Endothelial cell of umbilical vein (primary cell): ENCODE measurements at regions of chr5 and their contacts with region 1.

Region 1: DNA sequence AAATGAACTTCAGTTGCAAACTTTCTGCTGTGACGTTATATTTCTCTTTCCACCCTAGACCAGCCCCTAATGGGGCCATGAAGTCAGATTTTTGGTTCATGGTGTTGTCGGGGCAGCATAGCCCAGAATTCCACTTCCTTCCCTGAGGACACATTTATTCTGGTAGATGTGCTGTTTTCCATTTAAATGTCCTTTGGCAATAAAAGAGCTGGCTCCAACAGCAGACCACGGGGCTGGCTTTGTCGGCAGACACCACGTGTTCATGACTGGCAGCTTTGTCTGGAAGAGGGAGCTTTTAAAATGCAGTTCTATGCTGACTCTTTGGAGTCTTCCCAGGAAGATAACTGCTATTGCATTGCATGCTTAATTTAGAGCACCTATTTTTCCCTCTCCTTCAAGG is 17.6 kb upstream of the LCP2 start:
- DNase-seq: no peak
- H3K4me3 ChIP-seq: no peak overlapping the region
- H3K27ac ChIP-seq: no peak overlapping the region
- H3K4me1 ChIP-seq: peaks cover 3% of the 10 kb centered on the region
- H3K27me3 ChIP-seq: peaks cover under 1 to 3% of the 10 kb centered on the region in 2 experiments
- CTCF ChIP-seq: no peak
- POLR2A ChIP-seq: no peak

Region 2: DNA sequence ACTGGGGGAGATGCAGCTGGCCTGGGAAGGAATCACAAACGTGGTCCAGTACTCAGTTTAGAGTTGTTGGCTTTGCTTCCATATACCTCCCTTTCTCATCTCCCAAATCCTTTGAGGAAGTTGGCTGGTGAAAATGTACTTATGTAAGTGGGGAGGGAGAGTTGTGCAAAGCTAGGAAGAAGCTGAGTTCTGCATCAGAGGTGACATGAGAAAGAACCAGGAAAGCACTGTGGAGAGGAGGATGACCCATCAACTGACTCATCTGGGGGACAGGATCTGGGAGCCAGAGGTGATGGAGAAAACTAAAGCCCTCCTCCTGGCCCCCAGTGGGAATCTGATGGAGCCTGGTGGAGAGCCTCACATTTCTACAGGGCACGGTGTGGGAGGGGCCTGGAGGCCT is 57.8 kb after region 1 on chr5:
- CTCF ChIA-PET with region 1: no interaction called
- POLR2A ChIA-PET with region 1: no interaction called
- dilution Hi-C with region 1: no loop called
- intact Hi-C with region 1: loop called (anchors 5 kb)
- DNase-seq: no peak
- H3K4me3 ChIP-seq: no peak overlapping the region
- H3K27ac ChIP-seq: no peak overlapping the region
- H3K4me1 ChIP-seq: no peaks in the 10 kb centered on the region
- H3K27me3 ChIP-seq: peaks cover 2 to 3% of the 10 kb centered on the region in 2 experiments
- CTCF ChIP-seq: no peak
- POLR2A ChIP-seq: no peak